Prostate gland (tissue), 2 donors: ENCODE measurements at regions of chr19 and their contacts with region 1.

Region 1: DNA sequence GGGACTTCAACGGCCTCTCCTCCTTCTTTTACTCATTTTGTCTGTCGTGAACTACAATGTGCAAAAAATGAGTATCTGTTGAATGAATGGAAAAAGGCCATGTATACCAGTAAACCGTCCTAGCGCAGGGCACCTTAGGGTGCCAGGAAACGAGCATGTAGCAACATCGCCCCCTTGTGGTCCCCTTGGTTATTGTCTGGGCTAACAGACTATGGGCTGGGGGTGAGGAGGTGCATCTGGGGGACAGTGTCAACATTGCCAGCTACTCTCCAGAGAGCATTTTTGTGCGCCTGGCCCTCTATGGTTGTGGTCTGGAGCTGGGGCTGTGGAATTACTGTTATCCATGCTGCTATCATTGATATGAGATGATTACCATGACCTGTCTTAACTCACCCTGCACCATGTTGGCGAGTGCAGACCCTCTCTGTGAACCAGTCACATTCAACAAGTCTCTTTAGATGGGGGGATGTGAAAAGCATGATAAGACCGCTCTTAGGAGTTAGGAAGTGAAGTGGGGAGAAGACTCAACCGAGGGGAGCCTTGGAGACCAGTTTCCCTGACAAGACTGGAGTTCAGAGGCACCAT is 22.8 kb upstream of the SIGLEC11 start:
- DNase-seq: peak; percentile 33
- H3K4me3 ChIP-seq: no peak overlapping the region
- H3K27ac ChIP-seq: no peak overlapping the region
- H3K4me1 ChIP-seq: no peaks in the 10 kb centered on the region
- H3K27me3 ChIP-seq: no peaks in the 10 kb centered on the region
- CTCF ChIP-seq: peak; percentile 62 to 81 (median 77)
- POLR2A ChIP-seq: no peak

Region 2: DNA sequence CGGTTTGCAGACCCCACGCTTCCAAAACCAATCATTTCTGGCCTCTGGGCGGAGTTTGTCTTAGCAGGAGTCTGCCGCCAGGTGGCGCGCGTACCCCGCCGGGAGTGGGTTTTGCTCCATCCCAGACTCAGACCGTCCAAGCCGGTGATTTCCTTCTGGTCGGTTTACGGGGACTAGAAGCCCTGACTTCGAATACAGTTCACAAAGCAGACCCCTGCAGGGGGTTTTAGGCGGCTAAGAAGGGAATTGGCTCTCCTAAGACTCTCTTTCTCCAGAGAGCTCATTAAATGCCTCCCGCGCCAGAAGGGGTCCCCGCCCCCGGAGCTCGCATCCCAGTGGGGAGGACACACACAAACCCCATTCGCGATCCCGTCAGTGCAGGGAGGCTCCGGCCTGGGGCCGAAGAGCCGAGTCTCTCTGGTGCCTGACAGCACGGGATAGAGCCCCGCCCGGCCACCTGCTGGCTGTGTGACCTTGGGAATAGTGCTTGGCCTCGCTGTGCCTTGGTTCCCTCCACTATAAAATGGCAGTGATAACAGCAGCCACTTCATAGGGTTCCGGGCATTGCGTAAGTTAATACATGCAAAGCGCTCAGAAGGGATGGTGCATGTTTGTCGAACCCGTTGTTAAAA is 45.9 kb before region 1 on chr19:
- intact Hi-C with region 1: loop called (anchors 2 kb)
- DNase-seq: peak; percentile 59
- H3K4me3 ChIP-seq: peak overlapping the region in 1 of 2 donors; percentile 13
- H3K27ac ChIP-seq: no peak overlapping the region
- H3K4me1 ChIP-seq: peaks cover 3% of the 10 kb centered on the region
- H3K27me3 ChIP-seq: no peaks in the 10 kb centered on the region
- CTCF ChIP-seq: peak; percentile 92 to 96 (median 94)
- POLR2A ChIP-seq: no peak